Activated CD4-positive, alpha-beta T cell treated with anti-CD3 and anti-CD28 coated beads, Interleukin-2, amount 10 ng/mL, durations not matched to agents 24 days and 14 days (primary cell): ENCODE measurements at regions of chr1 and their contacts with region 1.

Region 1: GRCh38 chr1:221741711-221742554 is at the start of gene DUSP10:
- DNase-seq: peak; percentile 100
- H3K4me3 Mint-ChIP-seq: no peak within 1 kb of the TSS
- H3K27ac Mint-ChIP-seq: no peak within 1 kb of the TSS
- H3K4me1 Mint-ChIP-seq: peaks cover 34% of the 10 kb centered on the region
- H3K27me3 Mint-ChIP-seq: no peaks in the 10 kb centered on the region
- total RNA-seq, gene DUSP10: 13.5 and 14.6 TPM in 2 replicates

Region 2: DNA sequence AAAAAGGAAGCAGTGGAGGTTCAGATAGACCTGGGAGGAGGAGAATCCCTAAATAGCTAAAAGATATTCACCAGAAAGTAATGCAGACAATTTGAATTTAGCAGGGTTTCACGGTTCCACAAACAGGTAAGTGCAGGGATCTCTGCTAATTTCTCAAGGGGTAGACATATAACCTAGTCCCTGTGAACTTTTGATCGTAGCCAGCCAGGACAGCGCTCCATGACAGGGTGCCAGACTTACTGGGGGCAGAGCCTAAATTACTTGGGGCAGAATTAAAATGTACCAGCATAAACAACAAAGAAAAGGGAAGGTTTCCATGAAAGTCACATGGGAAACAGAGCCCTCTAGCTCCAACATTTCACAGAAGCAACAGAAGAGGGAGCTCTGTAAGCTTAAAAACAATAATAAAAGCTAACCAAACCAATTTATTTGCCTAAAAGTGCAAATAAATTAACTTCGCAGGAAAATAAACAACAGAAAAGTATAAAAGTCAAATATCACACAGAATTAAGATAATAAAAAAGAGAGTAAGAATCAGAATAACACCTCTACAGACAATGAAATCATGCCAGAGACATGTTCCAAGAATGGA is 198.3 kb before region 1 on chr1:
- intact Hi-C with region 1: loop called (anchors 5 kb)
- DNase-seq: no peak
- H3K4me3 Mint-ChIP-seq: no peak overlapping the region
- H3K27ac Mint-ChIP-seq: no peak overlapping the region
- H3K4me1 Mint-ChIP-seq: no peaks in the 10 kb centered on the region
- H3K27me3 Mint-ChIP-seq: peaks cover 20% of the 10 kb centered on the region

Region 3: GRCh38 chr1:221753828-221754188 is 11.9 kb after region 1 on chr1:
- intact Hi-C with region 1: loop called (anchors 1 kb)
- DNase-seq: no peak
- H3K4me3 Mint-ChIP-seq: peak overlapping the region; percentile 38
- H3K27ac Mint-ChIP-seq: peak overlapping the region; percentile 86
- H3K4me1 Mint-ChIP-seq: peaks cover 55% of the 10 kb centered on the region
- H3K27me3 Mint-ChIP-seq: no peaks in the 10 kb centered on the region

Region 4: DNA sequence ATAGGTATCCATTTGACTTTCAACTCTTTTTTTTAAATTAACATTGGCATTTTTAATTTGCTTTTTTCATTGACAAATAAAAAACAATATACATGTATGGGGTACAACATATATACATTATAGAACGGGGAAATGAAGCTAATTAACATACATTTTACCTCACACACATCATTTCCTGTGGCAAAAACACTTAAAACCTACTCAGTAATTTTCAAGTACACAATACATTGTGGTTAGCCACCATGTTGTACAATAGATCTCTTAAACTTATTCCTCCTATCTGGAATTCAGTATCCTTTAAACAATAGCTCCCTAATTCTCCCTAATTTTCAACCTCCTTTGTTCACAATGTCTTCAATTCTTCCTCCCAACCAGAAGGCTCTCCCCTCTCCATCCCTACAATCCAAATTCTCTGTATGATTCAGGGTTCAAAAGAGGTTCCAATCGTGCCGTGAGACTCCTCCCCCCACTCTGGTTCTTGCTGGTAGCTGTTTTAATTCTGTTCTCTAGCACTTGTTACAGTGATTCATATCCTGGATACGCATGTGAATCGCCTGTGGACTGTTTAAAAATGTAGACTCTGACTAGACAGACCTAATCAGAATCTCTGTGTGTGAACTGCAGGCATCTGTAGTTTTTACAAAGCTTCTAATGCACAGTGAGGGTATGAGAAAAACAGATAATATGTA is 87.5 kb after region 1 on chr1:
- intact Hi-C with region 1: loop called (anchors 1 kb)
- DNase-seq: peak; percentile 84
- H3K4me3 Mint-ChIP-seq: peak overlapping the region; percentile 73
- H3K27ac Mint-ChIP-seq: peak overlapping the region; percentile 90
- H3K4me1 Mint-ChIP-seq: peaks cover 67% of the 10 kb centered on the region
- H3K27me3 Mint-ChIP-seq: no peaks in the 10 kb centered on the region

Region 5: DNA sequence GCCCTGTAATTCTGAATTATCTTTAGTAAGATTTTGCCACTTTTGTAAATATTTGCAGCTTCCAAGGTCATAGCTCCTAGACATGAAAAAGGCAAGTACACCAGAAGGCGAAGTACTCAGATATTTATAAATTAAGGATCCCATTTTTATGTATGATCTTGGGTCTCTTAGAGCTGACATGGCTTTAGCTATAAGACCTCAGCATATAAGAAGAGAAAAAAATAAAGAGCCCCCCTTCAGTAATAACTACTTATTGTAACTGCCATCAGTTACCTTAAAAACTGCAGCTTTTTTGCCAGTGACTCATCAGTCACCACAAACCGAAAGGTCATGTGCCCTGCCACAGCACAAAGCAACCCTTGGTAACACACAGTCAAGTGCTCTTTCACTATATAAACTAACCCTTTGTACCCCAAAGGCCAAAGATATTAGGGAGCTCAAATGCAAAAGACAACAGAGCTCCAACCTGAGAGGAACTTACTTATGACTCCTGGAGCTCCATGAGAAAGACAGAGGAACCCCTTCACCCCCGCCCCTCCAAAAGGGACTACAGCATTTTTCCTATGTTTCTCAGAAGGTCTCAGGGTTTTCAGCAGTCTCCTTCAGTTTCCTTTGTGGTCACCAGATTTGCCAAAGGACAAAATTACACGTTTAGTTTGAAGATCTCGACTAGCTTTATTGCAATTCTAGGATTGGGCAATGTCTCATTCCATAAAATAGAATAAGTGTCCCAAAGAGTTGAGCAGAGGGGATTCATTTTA is 219.8 kb after region 1 on chr1:
- intact Hi-C with region 1: loop called (anchors 5 kb)
- DNase-seq: peak; percentile 84
- H3K4me3 Mint-ChIP-seq: peak overlapping the region; percentile 29
- H3K27ac Mint-ChIP-seq: peak overlapping the region; percentile 42
- H3K4me1 Mint-ChIP-seq: peaks cover 18% of the 10 kb centered on the region
- H3K27me3 Mint-ChIP-seq: no peaks in the 10 kb centered on the region

Region 6: GRCh38 chr1:222455188-222455879 is 713.4 kb after region 1 on chr1:
- intact Hi-C with region 1: loop called (anchors 1 kb)
- DNase-seq: peak; percentile 94
- H3K4me3 Mint-ChIP-seq: no peak overlapping the region
- H3K27ac Mint-ChIP-seq: no peak overlapping the region
- H3K4me1 Mint-ChIP-seq: peaks cover 6% of the 10 kb centered on the region
- H3K27me3 Mint-ChIP-seq: no peaks in the 10 kb centered on the region